PC-9 (cell line): ENCODE measurements at regions of chr13 and their contacts with region 1.

Region 1: GRCh38 chr13:111911754-111912452 is 155.0 kb upstream of the SOX1 start:
- DNase-seq: no peak
- H3K4me3 ChIP-seq: no peak overlapping the region
- H3K27ac ChIP-seq: no peak overlapping the region
- H3K4me1 ChIP-seq: no peaks in the 10 kb centered on the region
- H3K27me3 ChIP-seq: peaks cover 100% of the 10 kb centered on the region
- CTCF ChIP-seq: no peak

Region 2: GRCh38 chr13:111505175-111505777 is 406.6 kb before region 1 on chr13:
- CTCF ChIA-PET with region 1: interaction called, 22 read pairs
- POLR2A ChIA-PET with region 1: no interaction called
- intact Hi-C with region 1: no loop called
- DNase-seq: no peak
- H3K4me3 ChIP-seq: no peak overlapping the region
- H3K27ac ChIP-seq: no peak overlapping the region
- H3K4me1 ChIP-seq: no peaks in the 10 kb centered on the region
- H3K27me3 ChIP-seq: peaks cover 92% of the 10 kb centered on the region
- CTCF ChIP-seq: peak; percentile 33; the same call in 1 of the 2 replicates